ENCODE measurements at regions of chr17 and their contacts with region 1.

Region 1: GRCh38 chr17:39547713-39548478 is 59.8 kb downstream of the NEUROD2 start:
- DNase-seq: peak; percentile 87
- H3K4me3 Mint-ChIP-seq: no peak overlapping the region
- H3K27ac Mint-ChIP-seq: no peak overlapping the region
- H3K4me1 Mint-ChIP-seq: no peaks in the 10 kb centered on the region
- H3K27me3 Mint-ChIP-seq: no peaks in the 10 kb centered on the region

Region 2: DNA sequence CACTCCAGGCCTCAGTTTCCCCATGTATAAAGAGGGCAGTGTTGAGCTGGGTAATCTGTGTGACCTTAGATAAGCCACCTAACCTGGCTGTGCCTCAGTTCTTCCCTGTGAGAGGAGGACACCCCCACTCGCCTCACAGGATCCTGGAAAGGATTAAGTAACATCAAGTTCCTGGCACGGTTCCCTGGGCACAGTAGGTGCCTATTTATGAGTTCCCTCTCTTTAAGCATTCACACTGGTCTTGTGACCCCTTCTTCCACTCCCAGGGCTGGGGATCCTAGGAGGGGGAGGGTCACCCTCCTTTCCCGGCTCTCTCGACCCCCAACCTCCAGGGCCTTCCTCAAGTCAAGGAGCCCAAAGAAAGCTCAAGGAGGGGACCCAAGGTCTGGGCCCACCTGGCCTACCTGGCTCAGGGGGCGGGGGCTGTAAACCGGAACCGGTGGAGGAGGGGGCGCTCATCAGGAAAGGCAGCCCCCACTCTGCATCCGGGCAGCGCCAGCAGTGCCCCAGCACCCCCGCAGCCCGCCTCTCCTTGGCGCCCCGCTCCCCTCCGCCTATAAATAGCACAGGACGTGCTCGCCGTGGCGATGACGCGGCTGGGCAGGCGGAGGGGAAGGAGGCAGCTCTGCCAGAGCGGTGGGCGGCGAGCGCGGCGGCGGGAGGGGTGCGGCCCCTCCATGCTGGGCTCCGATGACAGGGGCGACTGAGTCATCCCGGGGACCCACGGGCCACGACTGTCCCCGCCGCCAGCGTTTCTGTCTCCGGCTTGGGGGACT is 338.4 kb before region 1 on chr17:
- CTCF ChIA-PET with region 1: interaction called, 3 read pairs
- intact Hi-C with region 1: loop called (anchors 2 kb)
- DNase-seq: peak; percentile 79
- H3K4me3 Mint-ChIP-seq: peak overlapping the region; percentile 24
- H3K27ac Mint-ChIP-seq: no peak overlapping the region
- H3K4me1 Mint-ChIP-seq: peaks cover 31% of the 10 kb centered on the region
- H3K27me3 Mint-ChIP-seq: no peaks in the 10 kb centered on the region

Region 3: DNA sequence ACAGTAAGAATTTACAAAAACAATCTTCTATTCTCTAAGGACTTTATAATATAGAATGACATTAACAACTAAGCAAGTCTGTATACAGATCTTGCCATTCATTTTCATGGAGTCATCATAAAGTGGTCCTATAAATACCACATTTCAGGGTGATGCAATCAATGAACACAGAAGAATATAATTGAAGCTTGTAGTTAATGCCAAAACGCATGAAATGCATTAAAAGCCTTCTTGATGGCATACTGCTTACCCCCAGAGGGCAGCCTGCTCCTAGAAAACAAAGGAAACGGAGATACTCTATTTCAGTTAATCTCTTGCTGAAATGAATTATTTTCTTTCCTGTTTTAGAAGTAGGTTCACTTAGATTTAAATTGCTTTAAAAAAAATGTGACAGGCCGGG is 277.0 kb before region 1 on chr17:
- CTCF ChIA-PET with region 1: no interaction called
- intact Hi-C with region 1: loop called (anchors 5 kb)
- DNase-seq: peak; percentile 33
- H3K4me3 Mint-ChIP-seq: no peak overlapping the region
- H3K27ac Mint-ChIP-seq: no peak overlapping the region
- H3K4me1 Mint-ChIP-seq: no peaks in the 10 kb centered on the region
- H3K27me3 Mint-ChIP-seq: no peaks in the 10 kb centered on the region

Region 4: GRCh38 chr17:39599665-39600231 is 51.9 kb after region 1 on chr17:
- CTCF ChIA-PET with region 1: no interaction called
- intact Hi-C with region 1: loop called (anchors 5 kb)
- DNase-seq: no peak
- H3K4me3 Mint-ChIP-seq: no peak overlapping the region
- H3K27ac Mint-ChIP-seq: no peak overlapping the region
- H3K4me1 Mint-ChIP-seq: peaks cover 32% of the 10 kb centered on the region
- H3K27me3 Mint-ChIP-seq: peaks cover 83% of the 10 kb centered on the region

Measured in activated naive CD4-positive, alpha-beta T cell treated with anti-CD3 and anti-CD28 coated beads for 36 hours (primary cell).